ENCODE measurements at regions of chr15 and their contacts with region 1.

Region 1: DNA sequence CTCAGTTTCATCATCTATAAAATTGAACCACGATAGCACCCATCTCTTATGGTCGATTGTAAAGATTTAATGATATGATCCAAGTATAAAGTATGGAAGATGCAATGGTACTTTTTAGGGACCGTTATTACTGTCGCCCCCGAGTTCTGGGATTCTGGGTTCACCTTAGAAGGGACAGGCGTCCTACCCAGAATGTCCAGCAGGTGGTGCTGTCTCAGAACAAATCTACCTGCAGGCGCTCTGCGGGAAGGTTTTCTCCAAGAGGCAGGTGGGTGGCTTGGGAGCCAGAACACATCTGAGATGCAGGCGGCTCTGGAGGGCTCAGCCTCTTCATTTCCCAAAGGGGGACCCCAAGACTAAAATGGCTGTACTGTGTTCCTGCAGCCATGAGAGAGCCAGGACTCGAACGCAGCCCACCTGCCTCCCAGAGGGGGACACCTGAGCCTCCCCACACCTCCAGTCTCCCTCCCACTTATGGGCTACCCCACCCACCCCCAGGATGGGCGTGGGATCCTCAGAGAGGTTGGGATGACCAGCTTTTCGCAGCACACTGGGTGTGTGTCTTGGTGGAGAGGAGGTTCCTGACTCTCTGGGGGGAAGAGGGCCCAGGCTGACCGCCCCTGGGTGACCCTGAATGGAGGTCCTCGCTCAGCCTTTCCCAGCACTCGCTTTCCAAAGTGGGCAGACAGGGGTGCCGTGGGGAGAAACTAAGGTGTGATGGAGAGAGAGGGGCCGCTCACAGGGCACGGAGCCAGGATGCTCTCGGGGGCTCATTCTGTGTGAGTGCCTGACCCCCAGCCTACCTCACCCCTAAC is 28.1 kb upstream of the CORO2B start:
- DNase-seq: peak; percentile 80
- ATAC-seq: peak in 1 of 2 donors; percentile 15

Region 2: GRCh38 chr15:68924866-68925560 is 374.3 kb after region 1 on chr15:
- intact Hi-C with region 1: loop called in 1 of 2 experiments (anchors 5 kb)
- DNase-seq: peak; percentile 79
- ATAC-seq: peak; percentile 82 to 90

Measured in left cardiac atrium (tissue), 4 donors.